ENCODE measurements at regions of chr5 and their contacts with region 1.

Region 1: GRCh38 chr5:152532714-152533113 is 127.6 kb upstream of the NMUR2 start:
- DNase-seq: no peak

Region 2: GRCh38 chr5:153147891-153148623 is 615.3 kb after region 1 on chr5:
- intact Hi-C with region 1: loop called (anchors 2 kb)
- DNase-seq: no peak

Region 3: GRCh38 chr5:153964880-153965645 is 1432.3 kb after region 1 on chr5:
- intact Hi-C with region 1: loop called (anchors 1 kb)
- DNase-seq: peak in 7 of 10 donors; percentile 36 to 93 (median 59)